AG04449 (cell line): ENCODE measurements at regions of chr2 and their contacts with region 1.

Region 1: GRCh38 chr2:99697811-99698568 is 208.2 kb upstream of the REV1 start:
- DNase-seq: peak; percentile 88
- H3K4me3 ChIP-seq: no peak overlapping the region
- CTCF ChIP-seq: no peak

Region 2: DNA sequence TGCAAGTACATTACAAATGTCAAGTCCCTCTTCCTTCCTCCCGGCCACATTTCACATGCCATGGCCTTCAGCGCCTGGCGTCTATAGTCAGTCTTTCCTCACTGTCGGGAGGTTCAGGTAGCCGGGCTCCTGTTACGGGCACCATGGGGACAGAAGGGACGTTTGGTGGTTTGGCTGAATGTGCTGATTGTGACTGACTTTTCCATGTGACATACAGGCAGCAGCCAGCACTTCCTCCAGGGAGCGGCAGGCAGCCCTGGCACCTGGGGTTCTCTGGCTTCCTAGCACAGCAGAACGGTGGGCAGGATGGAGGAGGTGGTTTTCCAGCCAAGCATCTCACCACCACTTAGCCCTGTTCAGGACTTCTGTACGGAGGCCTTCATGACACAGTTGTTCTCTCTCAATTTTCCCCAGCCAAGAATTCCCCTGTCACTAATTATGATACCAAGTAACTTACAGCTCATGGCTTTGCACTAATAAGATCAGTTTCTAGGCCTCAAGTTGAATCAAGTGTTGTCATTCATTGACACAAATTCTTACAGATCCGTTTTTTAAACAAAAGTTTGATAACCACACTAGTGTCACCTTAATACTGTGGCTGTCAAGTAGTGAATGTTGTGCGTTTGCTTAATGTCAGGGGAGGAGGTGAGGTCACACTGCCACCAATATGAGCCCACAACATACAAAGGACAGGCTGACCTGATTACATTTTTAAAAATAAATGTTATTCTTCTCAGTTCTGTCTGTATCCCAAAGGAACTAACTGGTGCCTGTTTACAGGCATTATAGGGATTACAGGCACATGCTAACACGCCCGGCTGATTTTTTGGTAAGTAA is 124.1 kb before region 1 on chr2:
- CTCF ChIA-PET with region 1: no interaction called
- POLR2A ChIA-PET with region 1: no interaction called
- DNase-seq: no peak
- H3K4me3 ChIP-seq: no peak overlapping the region
- CTCF ChIP-seq: no peak

Region 3: GRCh38 chr2:99662761-99663341 is 35.1 kb before region 1 on chr2:
- CTCF ChIA-PET with region 1: no interaction called
- POLR2A ChIA-PET with region 1: interaction called, 12 read pairs
- DNase-seq: peak; percentile 95
- H3K4me3 ChIP-seq: no peak overlapping the region
- CTCF ChIP-seq: no peak

Region 4: DNA sequence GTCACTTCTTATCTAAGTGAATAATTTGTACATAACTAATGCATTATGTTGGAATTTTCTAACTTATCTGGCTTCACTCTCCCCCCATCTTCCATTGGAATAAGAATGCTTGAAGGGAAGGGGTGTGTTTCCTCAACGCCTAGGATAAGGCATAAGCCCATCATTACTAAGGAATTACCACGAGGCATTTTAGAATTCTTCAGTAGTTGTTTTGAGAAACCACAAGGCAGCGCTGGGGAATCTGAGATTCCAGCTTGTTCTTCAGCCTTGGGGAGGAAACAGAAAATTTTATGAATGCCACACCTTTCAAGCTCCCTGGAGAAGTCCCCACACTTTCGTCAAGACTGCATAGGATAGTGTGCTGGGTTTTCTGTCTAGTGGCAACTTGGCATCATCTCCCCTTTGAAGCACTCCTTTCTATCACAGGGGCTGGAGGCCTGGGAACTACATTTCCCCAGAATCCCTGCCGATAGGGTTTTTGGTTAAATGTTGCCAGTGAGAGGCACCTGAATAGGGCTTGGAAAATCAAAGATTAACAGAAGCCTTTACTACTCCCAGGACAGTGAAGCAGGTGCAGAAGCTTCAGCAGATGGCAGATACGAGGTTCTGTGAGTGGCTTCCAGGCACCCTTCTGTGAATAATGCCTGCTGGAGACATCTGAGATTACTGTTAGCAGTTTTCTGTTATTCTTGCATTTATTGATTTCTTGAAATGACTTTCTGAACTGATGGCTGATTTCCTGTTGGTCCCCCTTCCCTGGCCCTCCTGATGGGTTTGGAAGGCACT is 15.5 kb before region 1 on chr2:
- CTCF ChIA-PET with region 1: interaction called, 3 read pairs
- POLR2A ChIA-PET with region 1: interaction called, 14 read pairs
- DNase-seq: peak; percentile 65
- H3K4me3 ChIP-seq: no peak overlapping the region
- CTCF ChIP-seq: no peak

Region 5: DNA sequence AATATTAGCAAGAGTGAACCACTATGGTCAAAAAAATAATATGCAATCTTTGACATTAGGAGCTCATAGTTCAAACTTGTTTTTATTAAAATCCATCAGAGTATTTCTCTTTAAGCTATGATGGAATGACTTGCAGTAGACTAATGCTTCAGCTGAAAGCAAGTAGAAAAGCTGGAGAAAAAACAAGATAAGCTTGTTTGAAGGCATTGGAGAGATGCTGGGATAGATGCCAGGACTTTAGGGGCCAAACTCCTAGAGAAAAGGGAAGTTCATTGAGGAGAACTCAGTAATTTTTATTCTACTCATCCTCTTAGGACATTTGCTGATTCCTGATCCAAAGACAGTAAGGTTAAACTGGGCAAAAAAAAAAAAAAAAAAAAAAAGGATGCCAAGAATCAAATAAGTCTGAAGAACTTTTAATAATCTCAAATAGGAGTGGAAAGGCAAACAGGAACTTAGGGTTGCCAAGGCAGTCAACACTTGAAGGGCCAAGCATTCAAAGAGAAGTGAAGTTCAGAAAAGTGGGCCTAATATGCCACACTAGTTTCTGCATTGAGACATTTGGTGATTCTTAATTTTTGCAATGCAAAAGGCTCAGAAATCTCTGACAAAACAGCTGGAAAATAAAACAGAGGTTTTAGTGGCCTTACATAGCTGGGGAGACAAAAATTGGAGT is 464.1 kb after region 1 on chr2:
- CTCF ChIA-PET with region 1: no interaction called
- POLR2A ChIA-PET with region 1: no interaction called
- DNase-seq: no peak
- H3K4me3 ChIP-seq: no peak overlapping the region
- CTCF ChIP-seq: no peak